ENCODE measurements at regions of chr1 and their contacts with region 1.

Region 1: DNA sequence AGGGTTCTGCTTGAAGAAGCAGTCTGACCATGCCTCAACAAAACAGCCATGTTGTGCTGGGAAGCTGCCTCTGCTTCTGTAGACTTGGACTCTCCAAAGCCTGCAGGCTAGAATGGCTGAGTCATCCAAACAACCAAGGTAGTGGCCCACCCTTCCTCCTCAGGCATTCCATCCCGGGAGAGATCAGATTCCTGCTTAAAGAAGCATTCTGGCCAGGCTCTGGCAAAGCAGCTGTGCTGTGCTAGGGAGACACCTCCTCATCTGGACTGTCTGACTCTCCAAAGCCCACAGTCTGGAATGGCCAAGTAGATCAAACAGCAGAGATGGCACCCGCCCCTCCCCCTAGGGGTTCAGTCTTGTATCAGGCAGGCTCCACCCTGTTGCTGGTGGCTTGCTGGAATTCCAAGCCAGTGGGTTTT is 38.3 kb upstream of the F3 start:
- DNase-seq: peak; percentile 88 to 98
- H3K4me3 ChIP-seq: no peak overlapping the region
- H3K27ac ChIP-seq: peak overlapping the region; percentile 66
- H3K4me1 ChIP-seq: peaks cover 35% of the 10 kb centered on the region
- H3K27me3 ChIP-seq: no peaks in the 10 kb centered on the region
- CTCF ChIP-seq: no peak

Region 2: DNA sequence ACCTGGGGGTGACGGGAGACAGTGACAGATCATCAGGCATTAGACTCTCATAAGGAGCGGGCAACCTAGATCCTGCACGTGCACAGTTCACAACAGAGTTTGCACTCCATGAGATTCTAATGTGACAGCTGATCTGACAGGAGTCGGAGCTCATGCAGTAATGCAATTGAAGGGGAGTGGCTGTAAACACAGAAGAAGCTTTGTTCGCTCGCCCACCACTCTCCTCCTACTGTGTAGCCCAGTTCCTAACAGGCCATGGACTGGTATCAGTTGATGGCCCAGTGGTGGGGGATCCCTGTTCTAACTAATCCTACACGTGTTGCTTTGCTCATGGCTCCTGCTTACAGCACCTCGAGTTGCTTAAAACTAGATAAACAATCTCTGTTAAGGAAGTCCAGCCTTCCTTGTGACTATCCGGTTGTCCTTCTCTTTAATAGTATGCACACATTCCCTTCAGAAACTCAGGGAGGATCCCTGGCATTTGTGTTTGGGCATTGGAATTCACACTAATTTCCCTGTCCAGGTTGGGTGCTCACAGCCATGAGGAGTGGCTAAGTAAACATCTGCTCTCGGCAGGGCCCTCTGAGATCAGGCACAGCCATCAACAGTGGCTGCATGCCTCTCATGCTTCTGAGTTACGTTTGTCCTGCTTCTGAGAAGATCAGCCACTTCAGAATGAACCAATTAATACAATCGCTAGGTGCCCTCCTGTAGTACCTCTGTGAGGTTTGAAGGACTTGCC is 17.2 kb before region 1 on chr1:
- CTCF ChIA-PET with region 1: no interaction called
- POLR2A ChIA-PET with region 1: interaction called, 3 read pairs
- intact Hi-C with region 1: loop called (anchors 2 kb)
- DNase-seq: peak; percentile 75 to 94
- H3K4me3 ChIP-seq: no peak overlapping the region; the same call in 1 of the 2 replicates
- H3K27ac ChIP-seq: peak overlapping the region; percentile 65
- H3K4me1 ChIP-seq: peaks cover 39% of the 10 kb centered on the region
- H3K27me3 ChIP-seq: no peaks in the 10 kb centered on the region
- CTCF ChIP-seq: no peak